ENCODE measurements at regions of chr19 and their contacts with region 1.

Region 1: DNA sequence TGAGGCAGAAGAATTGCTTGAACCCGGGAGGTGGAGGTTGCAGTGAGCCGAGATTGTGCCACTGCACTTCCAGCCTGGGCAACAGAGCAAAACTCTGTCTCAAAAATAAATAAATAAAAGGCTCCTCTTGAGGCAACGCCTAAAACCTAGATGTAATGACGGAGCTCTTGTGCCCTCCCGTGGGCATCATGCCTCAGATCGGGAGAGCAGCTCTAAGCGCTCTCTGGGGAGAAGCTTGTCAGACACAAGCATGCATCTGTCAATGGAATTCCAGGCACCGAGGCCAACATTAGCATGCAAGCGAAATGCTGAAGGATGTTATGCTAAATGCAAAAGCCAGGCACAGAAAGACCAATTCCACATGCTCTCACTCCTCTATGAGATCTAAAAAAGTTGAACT is 45.6 kb upstream of the MRI1 start:
- DNase-seq: peak; percentile 53
- H3K4me3 ChIP-seq: no peak overlapping the region
- CTCF ChIP-seq: peak; percentile 53

Region 2: DNA sequence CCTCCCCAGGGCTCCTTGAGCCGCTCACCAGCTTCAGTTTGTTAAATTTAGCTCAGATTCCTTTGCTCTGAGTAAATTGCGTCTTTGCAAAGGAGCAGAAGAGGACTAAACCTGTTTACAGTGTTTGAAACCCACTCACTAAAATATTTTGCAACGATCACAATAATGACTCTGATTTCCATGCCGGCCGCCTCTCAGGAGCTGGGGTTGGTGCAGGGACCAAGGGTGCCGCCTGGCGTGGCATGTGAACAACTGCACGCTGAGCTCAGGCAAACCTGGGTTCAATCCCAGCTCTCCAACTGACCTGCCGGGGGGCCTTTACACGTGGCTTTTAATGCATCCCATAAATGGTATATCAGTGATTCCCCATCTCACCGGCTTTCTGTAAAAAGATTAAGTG is 143.8 kb before region 1 on chr19:
- CTCF ChIA-PET with region 1: interaction called, 10 read pairs
- POLR2A ChIA-PET with region 1: no interaction called
- DNase-seq: no peak
- H3K4me3 ChIP-seq: no peak overlapping the region
- CTCF ChIP-seq: peak; percentile 54

Region 3: GRCh38 chr19:13597640-13598039 is 121.1 kb before region 1 on chr19:
- CTCF ChIA-PET with region 1: interaction called, 278 read pairs
- POLR2A ChIA-PET with region 1: no interaction called
- DNase-seq: peak; percentile 17
- H3K4me3 ChIP-seq: no peak overlapping the region
- CTCF ChIP-seq: peak; percentile 57

Region 4: DNA sequence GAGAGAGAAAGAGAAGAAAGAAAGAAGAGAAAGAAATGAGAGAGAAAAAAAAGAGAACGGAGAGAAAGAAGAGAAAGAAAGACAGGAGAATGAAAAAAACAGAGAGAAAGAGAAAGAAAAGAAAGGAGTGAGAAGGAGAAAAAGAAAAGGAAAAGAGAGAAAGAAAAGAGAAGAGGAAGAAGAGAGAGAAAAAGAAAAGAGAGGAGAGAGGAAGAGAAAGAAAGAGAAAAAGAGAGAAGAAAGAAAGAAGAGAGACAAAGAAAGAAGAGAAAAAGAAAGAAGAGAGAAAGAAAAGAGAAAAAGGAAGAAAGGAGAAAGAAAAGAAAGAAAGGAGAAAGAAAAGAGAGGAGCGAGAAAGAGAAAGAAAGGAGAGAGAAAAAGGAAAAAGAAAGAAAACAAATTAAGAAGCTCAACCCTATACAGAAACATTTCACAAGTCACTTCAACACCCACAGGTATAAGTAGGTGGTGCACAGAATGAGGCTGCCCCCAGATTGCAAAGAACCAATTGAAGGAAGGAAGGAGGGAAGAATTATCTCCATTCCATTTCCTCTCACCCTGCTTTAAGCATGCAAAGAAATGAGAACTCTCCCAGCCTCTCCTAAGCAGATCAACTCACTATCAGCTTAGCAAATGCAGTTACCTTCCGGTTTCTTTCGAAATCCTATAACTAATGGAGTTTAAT is 113.7 kb before region 1 on chr19:
- CTCF ChIA-PET with region 1: interaction called, 278 read pairs
- POLR2A ChIA-PET with region 1: no interaction called
- DNase-seq: no peak
- H3K4me3 ChIP-seq: no peak overlapping the region
- CTCF ChIP-seq: no peak

Region 5: GRCh38 chr19:13731147-13731964 is 12.6 kb after region 1 on chr19:
- CTCF ChIA-PET with region 1: interaction called, 24 read pairs
- POLR2A ChIA-PET with region 1: interaction called, 3 read pairs
- DNase-seq: peak; percentile 90
- H3K4me3 ChIP-seq: peak overlapping the region; percentile 73
- CTCF ChIP-seq: no peak

Region 6: DNA sequence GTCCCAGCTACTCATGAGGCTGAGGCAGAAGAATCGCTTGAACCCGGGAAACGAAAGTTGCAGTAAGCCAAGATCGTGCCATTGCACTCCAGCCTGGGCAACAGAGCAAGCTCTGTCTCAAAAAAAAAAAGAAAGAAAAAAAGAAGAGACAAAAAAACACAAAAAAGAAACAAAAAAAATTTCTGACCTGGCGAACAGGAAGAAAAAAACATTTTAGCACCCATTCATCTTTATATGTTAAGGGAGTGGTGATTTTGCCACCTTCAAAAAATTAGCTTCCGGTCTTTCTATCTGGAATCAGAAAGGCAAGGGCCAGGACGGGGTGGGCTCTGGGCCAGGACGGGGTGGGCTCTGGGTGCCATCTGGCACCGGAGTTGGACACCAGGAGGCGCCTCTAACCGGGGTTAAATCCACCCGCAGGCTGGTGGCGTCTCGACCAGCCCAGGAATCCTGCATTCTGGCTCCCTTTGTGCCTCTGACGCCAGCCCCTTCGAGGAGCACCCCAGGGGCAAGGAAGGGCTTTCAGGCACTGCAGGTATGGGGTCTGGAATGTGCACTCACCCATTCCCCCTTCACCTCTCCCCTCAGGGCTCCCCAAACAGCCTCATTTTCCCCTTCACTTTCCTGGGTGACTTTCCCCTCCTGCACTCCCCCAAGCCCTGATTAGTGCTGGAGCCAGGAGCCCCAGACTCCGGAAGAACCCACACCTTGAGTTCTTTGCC is 66.2 kb after region 1 on chr19:
- CTCF ChIA-PET with region 1: no interaction called
- POLR2A ChIA-PET with region 1: no interaction called
- DNase-seq: no peak
- H3K4me3 ChIP-seq: no peak overlapping the region
- CTCF ChIP-seq: peak; percentile 78

Region 7: DNA sequence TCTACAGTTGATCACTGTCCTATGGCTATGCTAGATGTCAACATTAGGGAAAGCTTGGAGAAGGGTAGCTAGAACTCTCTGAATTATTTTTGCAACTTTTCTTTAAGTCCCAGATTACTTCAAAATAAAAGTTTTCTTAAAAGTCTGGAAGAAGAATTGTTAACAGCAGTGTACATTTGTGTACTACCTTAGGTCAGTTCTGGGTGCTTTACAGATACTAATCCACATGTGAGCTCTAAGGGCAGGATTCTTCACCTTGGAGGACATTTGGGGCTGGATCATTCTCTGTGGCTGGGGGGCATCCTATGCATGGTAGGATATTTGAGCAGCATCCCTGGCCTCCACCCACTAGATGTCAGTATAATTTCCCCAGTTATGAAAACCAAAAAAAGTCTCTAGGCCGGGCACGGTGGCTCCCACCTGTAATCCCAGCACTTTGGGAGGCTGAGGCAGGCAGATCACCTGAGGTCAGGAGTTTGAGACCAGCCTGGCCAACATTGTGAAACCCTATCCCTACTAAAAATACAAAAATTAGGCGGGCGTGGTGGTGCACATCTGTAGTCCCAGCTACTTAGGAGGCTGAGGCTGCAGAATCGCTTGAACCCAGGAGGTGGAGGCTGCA is 184.4 kb after region 1 on chr19:
- CTCF ChIA-PET with region 1: no interaction called
- POLR2A ChIA-PET with region 1: no interaction called
- DNase-seq: no peak
- H3K4me3 ChIP-seq: no peak overlapping the region
- CTCF ChIP-seq: peak; percentile 8

Measured in AG04449 (cell line).